Heart right ventricle (tissue), 16 donors: ENCODE measurements at regions of chr12 and their contacts with region 1.

Region 1: DNA sequence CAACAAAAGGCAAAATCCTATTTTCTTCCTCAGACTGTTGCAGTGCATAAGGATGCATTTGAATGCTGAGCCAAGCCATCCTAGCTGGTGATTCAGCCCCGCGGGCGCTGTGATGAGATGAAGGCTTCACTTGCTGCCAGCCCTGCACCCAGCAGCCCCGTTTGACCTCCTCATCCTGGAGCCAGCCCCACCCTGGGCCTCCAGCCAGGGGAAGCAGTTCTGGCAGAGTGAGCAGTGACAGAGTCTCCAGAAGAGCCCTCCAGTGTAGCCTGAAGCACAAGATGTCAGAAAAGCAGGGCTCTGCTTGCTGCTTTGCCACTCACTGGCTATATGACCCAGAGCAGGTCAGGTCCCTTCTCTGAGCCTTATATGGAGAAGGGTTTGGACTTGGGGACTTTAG is 96.2 kb upstream of the HSPB8 start:
- DNase-seq: peak; percentile 39 to 79
- ATAC-seq: peak; percentile 75 to 97 (median 88)
- H3K4me3 ChIP-seq: no peak overlapping the region
- H3K27ac ChIP-seq: no peak overlapping the region
- H3K4me1 ChIP-seq: peaks cover 0 to 7% (median 0%) of the 10 kb centered on the region in 9 donors
- H3K27me3 ChIP-seq: peaks cover 0 to 22% (median 10%) of the 10 kb centered on the region in 7 donors
- CTCF ChIP-seq: no peak

Region 2: GRCh38 chr12:118456741-118457140 is 625.8 kb before region 1 on chr12:
- intact Hi-C with region 1: no loop called
- DNase-seq: no peak
- ATAC-seq: no peak
- H3K4me3 ChIP-seq: no peak overlapping the region
- H3K27ac ChIP-seq: no peak overlapping the region
- H3K4me1 ChIP-seq: no peaks in the 10 kb centered on the region
- H3K27me3 ChIP-seq: no peaks in the 10 kb centered on the region
- CTCF ChIP-seq: no peak

Region 3: GRCh38 chr12:118884226-118884625 is 198.3 kb before region 1 on chr12:
- intact Hi-C with region 1: no loop called
- DNase-seq: no peak
- ATAC-seq: no peak
- H3K4me3 ChIP-seq: no peak overlapping the region
- H3K27ac ChIP-seq: no peak overlapping the region
- H3K4me1 ChIP-seq: no peaks in the 10 kb centered on the region
- H3K27me3 ChIP-seq: peaks cover 0 to 17% (median 4%) of the 10 kb centered on the region in 7 donors
- CTCF ChIP-seq: no peak

Region 4: DNA sequence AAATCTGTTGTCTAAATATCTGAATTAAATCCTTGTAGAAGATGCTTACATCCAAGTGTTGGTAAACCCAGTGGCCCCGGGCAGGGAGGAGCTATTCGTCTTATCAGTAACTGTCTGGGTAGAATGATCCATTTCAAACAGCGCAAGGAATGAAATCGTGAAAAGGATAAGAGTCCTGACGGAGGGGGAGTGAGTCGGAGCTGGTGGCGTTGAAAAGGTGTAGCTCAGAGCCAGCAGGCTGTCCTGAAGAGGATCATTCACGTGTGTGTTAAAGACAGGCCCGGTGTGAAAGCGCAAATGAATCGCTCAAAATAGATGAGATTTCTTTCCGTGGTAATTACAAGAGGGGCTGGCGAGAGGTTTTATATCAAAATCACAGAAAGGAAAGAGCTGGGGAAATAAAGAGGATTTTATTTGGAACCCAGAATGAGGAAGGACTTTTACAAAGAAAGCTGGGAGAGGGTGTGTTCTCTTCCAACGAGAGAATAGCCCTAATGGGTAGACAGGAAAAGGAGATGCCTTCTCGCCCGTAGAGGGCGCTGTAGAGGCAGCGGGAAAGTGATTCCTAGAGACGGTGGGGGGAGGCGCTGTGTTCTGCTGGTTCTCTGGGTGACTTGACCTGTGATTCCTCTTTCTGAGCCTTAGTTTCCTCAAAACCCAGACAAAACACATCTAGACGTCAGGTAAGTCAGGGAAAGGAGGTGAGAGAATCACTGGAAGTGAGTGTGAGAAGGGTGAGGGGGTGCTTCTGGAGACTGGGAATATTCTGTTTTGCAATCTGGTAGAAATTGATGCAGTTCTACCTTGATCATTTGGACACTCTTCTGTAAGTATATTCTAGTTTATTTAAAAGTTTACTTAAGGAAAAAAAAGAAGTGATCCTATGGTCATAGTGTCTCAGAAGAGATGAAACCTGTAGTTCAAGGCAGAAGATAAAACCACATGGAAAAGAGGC is 61.8 kb before region 1 on chr12:
- intact Hi-C with region 1: loop called in 1 of 10 experiments (anchors 2 kb)
- DNase-seq: peak; percentile 30 to 57
- ATAC-seq: peak in 2 of 8 donors; percentile 35 to 70
- H3K4me3 ChIP-seq: no peak overlapping the region
- H3K27ac ChIP-seq: no peak overlapping the region
- H3K4me1 ChIP-seq: no peaks in the 10 kb centered on the region
- H3K27me3 ChIP-seq: peaks cover 0 to 51% (median 27%) of the 10 kb centered on the region in 7 donors
- CTCF ChIP-seq: peak; percentile 8 to 62 (median 49)